ENCODE measurements at regions of chr5 and their contacts with region 1.

Region 1: DNA sequence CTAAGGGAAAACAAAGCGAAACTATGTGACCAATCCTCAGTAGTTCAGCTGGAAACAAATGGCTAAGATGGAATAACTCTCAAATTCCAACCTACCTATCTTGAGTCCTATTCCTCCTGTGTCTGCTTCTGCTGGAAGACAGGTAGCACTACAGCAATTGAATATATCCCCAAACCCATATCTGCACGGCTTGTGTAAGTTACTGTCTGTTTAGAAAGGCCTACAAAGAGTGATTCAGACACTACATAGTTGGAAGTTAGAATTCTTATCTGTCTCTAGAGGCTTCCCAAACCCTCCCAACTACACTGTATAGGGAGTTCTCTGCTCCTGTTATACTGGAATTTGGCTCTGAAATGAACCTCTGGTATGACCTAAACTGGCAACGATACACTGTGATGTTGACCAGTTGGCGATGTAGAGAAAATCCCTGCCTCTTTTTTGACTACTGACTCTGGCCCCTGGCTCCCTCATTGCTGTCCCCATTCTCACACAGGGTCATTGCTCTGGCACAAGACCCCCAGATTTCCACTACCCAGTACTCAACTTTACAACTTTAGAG is 22.6 kb upstream of the NADK2 start:
- DNase-seq: no peak
- ATAC-seq: no peak
- H3K4me3 ChIP-seq: no peak overlapping the region
- H3K27ac ChIP-seq: no peak overlapping the region
- H3K4me1 ChIP-seq: no peaks in the 10 kb centered on the region
- H3K27me3 ChIP-seq: no peaks in the 10 kb centered on the region

Region 2: GRCh38 chr5:36397901-36398536 is 133.7 kb after region 1 on chr5:
- intact Hi-C with region 1: loop called in 1 of 4 experiments (anchors 10 kb)
- DNase-seq: no peak
- ATAC-seq: peak; percentile 69
- H3K4me3 ChIP-seq: no peak overlapping the region
- H3K27ac ChIP-seq: no peak overlapping the region
- H3K4me1 ChIP-seq: no peaks in the 10 kb centered on the region
- H3K27me3 ChIP-seq: no peaks in the 10 kb centered on the region

Measured in right cardiac atrium (tissue), 5 donors.